IMR-90 (cell line): ENCODE measurements at regions of chr14 and their contacts with region 1.

Region 1: GRCh38 chr14:93619176-93619793 is 169.0 kb downstream of the PRIMA1 start:
- DNase-seq: peak; percentile 50
- ATAC-seq: peak; percentile 68
- H3K4me3 ChIP-seq: no peak overlapping the region
- H3K27ac ChIP-seq: no peak overlapping the region
- H3K4me1 ChIP-seq: no peaks in the 10 kb centered on the region
- H3K27me3 ChIP-seq: no peaks in the 10 kb centered on the region
- CTCF ChIP-seq: peak; percentile 58
- POLR2A ChIP-seq: no peak
- RAD21 ChIP-seq: peak; percentile 60

Region 2: DNA sequence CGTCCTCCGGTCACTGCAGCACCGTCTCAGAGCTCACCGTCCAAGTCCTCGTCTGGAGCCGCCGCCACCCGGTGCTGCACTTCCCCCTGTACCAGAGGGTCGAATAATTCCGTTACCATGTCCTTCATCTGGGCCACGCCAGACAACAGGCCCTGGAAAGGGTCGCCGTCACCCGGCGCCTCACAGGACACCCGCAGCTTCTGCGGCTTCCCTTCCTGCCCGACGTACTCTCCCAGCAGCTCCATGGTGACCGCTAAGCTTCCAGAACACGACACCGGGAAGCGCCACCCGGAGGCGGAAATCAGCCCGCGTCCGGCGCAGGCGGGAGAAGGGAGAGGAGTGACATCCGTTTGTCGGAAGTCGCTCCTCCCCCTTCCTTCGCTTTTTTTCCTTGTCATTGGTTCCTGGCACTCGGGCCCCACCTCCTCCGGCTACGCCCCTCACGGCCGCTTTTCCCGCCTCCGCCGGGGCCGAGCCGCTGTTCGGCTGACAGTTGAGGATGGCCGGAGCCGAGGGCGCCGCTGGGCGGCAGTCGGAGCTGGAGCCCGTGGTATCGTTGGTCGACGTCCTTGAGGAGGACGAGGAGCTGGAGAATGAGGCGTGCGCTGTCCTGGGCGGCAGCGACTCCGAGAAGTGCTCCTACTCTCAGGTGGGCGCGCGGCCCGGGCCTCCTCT is 412.4 kb before region 1 on chr14 and contains the starts of genes GON7 and UBR7:
- CTCF ChIA-PET with region 1: no interaction called
- POLR2A ChIA-PET with region 1: no interaction called
- dilution Hi-C with region 1: no loop called
- in situ Hi-C with region 1: no loop called
- intact Hi-C with region 1: loop called (anchors 1 kb)
- DNase-seq: peak; percentile 96
- ATAC-seq: peak; percentile 95
- H3K4me3 ChIP-seq: peak within 1 kb of the TSS; percentile 88
- H3K27ac ChIP-seq: peak within 1 kb of the TSS; percentile 51
- H3K4me1 ChIP-seq: peaks cover 2% of the 10 kb centered on the region; the same call in 1 of the 2 replicates
- H3K27me3 ChIP-seq: no peaks in the 10 kb centered on the region
- CTCF ChIP-seq: peak; percentile 44
- POLR2A ChIP-seq: peak; percentile 80
- RAD21 ChIP-seq: no peak
- total RNA-seq, gene GON7: 4.3 and 10.3 TPM in 2 replicates
- total RNA-seq, gene UBR7: 29.4 and 55.8 TPM in 2 replicates

Region 3: GRCh38 chr14:93234798-93235197 is 384.5 kb before region 1 on chr14:
- CTCF ChIA-PET with region 1: no interaction called
- POLR2A ChIA-PET with region 1: no interaction called
- dilution Hi-C with region 1: no loop called
- in situ Hi-C with region 1: no loop called
- intact Hi-C with region 1: loop called (anchors 1 kb)
- DNase-seq: peak; percentile 85
- ATAC-seq: no peak; the same call in 1 of the 2 replicates
- H3K4me3 ChIP-seq: no peak overlapping the region
- H3K27ac ChIP-seq: no peak overlapping the region
- H3K4me1 ChIP-seq: peaks cover 4% of the 10 kb centered on the region
- H3K27me3 ChIP-seq: no peaks in the 10 kb centered on the region
- CTCF ChIP-seq: no peak
- POLR2A ChIP-seq: no peak
- RAD21 ChIP-seq: no peak

Region 4: DNA sequence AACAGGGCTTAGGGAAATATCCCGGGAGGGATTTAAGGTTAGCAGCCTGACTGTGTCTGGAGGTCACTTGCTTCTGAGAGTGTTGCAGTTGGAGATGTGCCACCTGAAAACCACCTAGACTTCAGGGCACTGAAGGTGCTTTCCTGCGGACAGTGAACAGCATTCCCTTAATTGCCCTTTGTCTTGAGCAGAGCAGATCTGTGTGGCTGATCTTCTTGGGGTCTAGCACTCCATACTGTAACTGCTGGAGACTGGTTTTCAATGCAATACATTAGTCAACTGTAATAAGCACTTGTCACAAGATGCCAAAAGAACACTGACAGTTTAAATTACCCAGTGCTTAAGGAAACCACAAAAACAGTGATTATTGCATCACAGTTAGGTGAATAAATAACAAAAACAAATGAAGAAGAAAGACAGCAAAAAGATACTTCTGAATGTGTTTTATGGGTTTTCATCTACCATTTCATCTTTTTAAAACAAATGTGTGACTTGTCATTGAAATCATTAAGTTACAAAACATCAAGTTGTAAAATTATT is 57.2 kb after region 1 on chr14:
- CTCF ChIA-PET with region 1: no interaction called
- POLR2A ChIA-PET with region 1: no interaction called
- dilution Hi-C with region 1: no loop called
- in situ Hi-C with region 1: no loop called
- intact Hi-C with region 1: no loop called
- DNase-seq: no peak
- ATAC-seq: no peak
- H3K4me3 ChIP-seq: no peak overlapping the region
- H3K27ac ChIP-seq: no peak overlapping the region
- H3K4me1 ChIP-seq: no peaks in the 10 kb centered on the region
- H3K27me3 ChIP-seq: no peaks in the 10 kb centered on the region
- CTCF ChIP-seq: no peak
- POLR2A ChIP-seq: no peak
- RAD21 ChIP-seq: no peak